Prostate gland (tissue), 2 donors: ENCODE measurements at regions of chr19 and their contacts with region 1.

Region 1: DNA sequence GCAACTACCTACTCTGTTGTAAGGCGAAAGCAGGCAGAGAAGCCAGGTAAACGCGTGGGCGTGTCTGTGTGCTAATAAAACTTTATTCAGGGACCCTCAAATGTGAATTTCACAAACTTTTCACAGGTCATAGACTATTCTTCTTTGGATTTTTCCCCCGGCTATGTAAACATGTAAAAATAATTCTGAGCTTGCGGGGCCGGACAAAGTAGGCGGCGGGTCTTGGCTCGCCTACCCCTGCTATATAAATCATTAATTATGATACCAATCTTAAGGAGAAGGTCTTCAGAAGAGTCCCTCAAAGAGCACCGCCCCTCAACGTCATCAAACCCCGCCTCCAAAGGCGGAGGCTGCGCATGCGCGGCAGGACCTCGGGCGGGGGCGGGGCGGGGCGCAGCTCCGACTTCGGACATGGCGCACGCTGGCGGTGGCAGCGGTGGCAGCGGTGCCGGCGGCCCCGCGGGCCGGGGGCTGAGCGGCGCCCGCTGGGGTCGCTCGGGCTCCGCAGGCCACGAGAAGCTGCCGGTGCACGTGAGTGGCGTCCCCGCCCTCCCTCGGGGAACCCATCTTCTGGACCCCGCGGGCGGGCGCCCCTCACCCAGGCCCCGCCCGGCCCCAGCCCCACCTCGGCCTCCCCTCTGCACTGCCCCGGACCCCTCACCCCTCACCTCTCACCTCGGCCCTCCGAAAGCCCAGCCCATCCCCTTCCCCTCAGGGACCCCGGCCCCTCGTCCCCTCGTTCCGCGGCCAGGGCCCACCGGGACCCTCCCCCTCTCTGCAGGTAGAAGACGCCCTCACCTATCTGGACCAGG is at the start of gene SIN3B:
- DNase-seq: peak; percentile 80
- H3K4me3 ChIP-seq: peak within 1 kb of the TSS; percentile 63 to 99
- H3K27ac ChIP-seq: peak within 1 kb of the TSS; percentile 74 to 83
- H3K4me1 ChIP-seq: no peaks in the 10 kb centered on the region
- H3K27me3 ChIP-seq: no peaks in the 10 kb centered on the region
- CTCF ChIP-seq: peak in 1 of 4 experiments; percentile 13
- POLR2A ChIP-seq: peak; percentile 81
- total RNA-seq, gene SIN3B: 37.8 to 159 TPM

Region 2: GRCh38 chr19:16737911-16738310 is 91.3 kb before region 1 on chr19:
- intact Hi-C with region 1: loop called (anchors 10 kb)
- DNase-seq: peak; percentile 59
- H3K4me3 ChIP-seq: no peak overlapping the region
- H3K27ac ChIP-seq: peak overlapping the region; percentile 34 to 73
- H3K4me1 ChIP-seq: peaks cover 2% of the 10 kb centered on the region
- H3K27me3 ChIP-seq: no peaks in the 10 kb centered on the region
- CTCF ChIP-seq: no peak
- POLR2A ChIP-seq: no peak

Region 3: DNA sequence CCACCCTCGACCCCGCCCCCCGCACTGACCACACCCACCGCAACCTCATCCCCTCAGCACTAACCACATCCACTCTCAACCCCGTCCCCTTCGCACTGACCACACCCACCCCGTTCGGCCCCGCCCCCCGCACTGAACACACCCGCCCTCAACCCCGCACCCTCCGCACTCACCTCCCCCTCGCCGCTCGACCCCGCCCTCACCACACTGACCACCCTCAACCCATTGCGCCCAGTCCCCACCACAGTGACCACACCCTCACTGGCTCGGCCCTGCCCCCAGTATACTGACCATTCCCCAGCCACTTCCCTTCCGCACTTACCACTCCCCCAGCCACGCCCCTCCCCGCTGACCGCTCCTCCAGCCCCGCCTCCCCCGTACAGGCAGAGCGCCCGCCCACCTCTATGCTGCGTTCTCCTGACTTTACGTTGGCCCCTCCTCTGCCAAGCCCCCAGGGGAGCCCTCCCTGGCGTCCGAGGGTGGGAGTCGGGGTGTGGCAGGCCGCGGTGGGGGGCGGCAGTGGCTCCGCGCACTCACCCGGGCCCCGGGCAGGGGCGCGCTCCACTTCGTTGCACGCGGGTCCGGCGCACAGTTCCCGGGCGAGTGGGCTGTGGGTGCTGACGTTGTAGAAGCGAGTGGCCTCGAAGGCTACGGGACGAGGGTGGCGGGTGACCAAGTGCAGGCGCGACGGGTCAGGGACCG is 68.1 kb after region 1 on chr19:
- intact Hi-C with region 1: loop called (anchors 5 kb)
- DNase-seq: peak; percentile 93
- H3K4me3 ChIP-seq: peak overlapping the region; percentile 35 to 38
- H3K27ac ChIP-seq: peak overlapping the region; percentile 82 to 87
- H3K4me1 ChIP-seq: no peaks in the 10 kb centered on the region
- H3K27me3 ChIP-seq: no peaks in the 10 kb centered on the region
- CTCF ChIP-seq: no peak
- POLR2A ChIP-seq: peak; percentile 58